ENCODE measurements at regions of chr14 and their contacts with region 1.

Region 1: GRCh38 chr14:92603309-92604242 is 90.0 kb downstream of the RIN3 start:
- DNase-seq: peak; percentile 43
- H3K4me3 ChIP-seq: no peak overlapping the region
- H3K27ac ChIP-seq: peak overlapping the region; percentile 72 to 80 (median 79)
- H3K4me1 ChIP-seq: peaks cover 10 to 37% (median 26%) of the 10 kb centered on the region in 4 donors
- H3K27me3 ChIP-seq: no peaks in the 10 kb centered on the region
- CTCF ChIP-seq: peak in 3 of 5 experiments; percentile 8 to 27 (median 23)
- EP300 ChIP-seq: no peak
- POLR2A ChIP-seq: no peak

Region 2: GRCh38 chr14:93059917-93060545 is 456.5 kb after region 1 on chr14:
- in situ Hi-C with region 1: no loop called
- intact Hi-C with region 1: loop called (anchors 10 kb)
- DNase-seq: no peak
- H3K4me3 ChIP-seq: no peak overlapping the region
- H3K27ac ChIP-seq: peak overlapping the region; percentile 28 to 77 (median 32)
- H3K4me1 ChIP-seq: peaks cover 45 to 81% (median 60%) of the 10 kb centered on the region in 4 donors
- H3K27me3 ChIP-seq: no peaks in the 10 kb centered on the region
- CTCF ChIP-seq: no peak
- EP300 ChIP-seq: no peak
- POLR2A ChIP-seq: no peak